ENCODE measurements at regions of chr1 and their contacts with region 1.

Region 1: DNA sequence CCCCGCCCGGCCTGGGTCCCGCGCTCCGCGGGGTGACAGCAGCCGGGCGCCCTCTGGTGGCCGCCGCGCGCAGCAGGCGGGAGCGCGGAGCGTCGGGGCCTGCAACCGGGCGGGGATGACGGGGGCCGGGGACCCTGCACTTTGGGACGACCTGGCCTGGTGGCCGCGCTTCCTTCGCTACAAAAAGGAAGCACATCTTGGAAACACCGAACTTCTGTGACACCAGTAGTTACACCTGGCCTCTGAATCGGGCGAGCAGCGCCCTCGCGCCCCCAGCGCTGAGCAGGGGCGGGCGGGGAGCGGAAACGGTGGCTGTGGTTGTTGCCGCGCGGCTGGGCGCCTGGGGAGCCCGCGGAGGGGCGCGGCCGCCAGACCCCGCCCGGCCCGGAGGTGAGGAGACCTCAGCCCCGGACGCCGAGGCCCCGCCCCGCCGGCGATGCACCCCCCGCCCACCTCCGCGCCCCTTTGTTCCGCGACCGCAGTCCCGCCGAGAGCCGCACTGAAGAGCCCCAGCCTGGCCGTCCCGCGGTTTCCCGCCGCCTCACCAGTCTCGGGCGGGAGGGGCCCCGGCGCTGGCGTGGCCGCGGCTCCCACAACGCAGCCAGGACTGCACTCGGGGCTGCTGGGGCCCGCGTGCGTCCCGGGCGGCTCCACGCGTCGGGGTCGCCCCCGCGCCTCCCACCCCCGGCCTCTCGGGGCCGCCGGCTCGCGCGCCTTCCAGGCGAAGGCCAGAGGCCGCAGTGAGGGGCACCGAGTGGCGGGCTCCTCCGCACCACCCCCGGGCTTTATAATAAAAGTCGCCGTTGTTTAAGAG is 59.3 kb downstream of the H3-3A start:
- DNase-seq: peak in 1 of 2 experiments; percentile 85
- H3K4me3 ChIP-seq: peak overlapping the region; percentile 79
- H3K27ac ChIP-seq: peak overlapping the region; percentile 74
- H3K4me1 ChIP-seq: peaks cover 26% of the 10 kb centered on the region
- H3K27me3 ChIP-seq: no peaks in the 10 kb centered on the region
- CTCF ChIP-seq: peak; percentile 71

Region 2: GRCh38 chr1:225474986-225475820 is 646.6 kb before region 1 on chr1:
- CTCF ChIA-PET with region 1: no interaction called
- POLR2A ChIA-PET with region 1: interaction called, 10 read pairs
- intact Hi-C with region 1: loop called (anchors 5 kb)
- DNase-seq: peak; percentile 54 to 86
- H3K4me3 ChIP-seq: no peak overlapping the region; the same call in 1 of the 2 replicates
- H3K27ac ChIP-seq: no peak overlapping the region
- H3K4me1 ChIP-seq: peaks cover 8% of the 10 kb centered on the region
- H3K27me3 ChIP-seq: no peaks in the 10 kb centered on the region
- CTCF ChIP-seq: peak; percentile 100

Region 3: GRCh38 chr1:225999227-225999911 is 122.4 kb before region 1 on chr1 and contains the start of gene SDE2:
- CTCF ChIA-PET with region 1: no interaction called
- POLR2A ChIA-PET with region 1: no interaction called
- intact Hi-C with region 1: loop called (anchors 1 kb)
- DNase-seq: peak; percentile 92 to 100
- H3K4me3 ChIP-seq: peak within 1 kb of the TSS; percentile 79
- H3K27ac ChIP-seq: peak within 1 kb of the TSS; percentile 67
- H3K4me1 ChIP-seq: peaks cover 27% of the 10 kb centered on the region
- H3K27me3 ChIP-seq: no peaks in the 10 kb centered on the region
- CTCF ChIP-seq: no peak
- total RNA-seq, gene SDE2: 16.0 and 17.3 TPM in 2 replicates

Region 4: GRCh38 chr1:226176870-226177269 is 55.1 kb after region 1 on chr1:
- CTCF ChIA-PET with region 1: interaction called, 11 read pairs
- POLR2A ChIA-PET with region 1: interaction called, 4 read pairs
- intact Hi-C with region 1: loop called (anchors 1 kb)
- DNase-seq: no peak
- H3K4me3 ChIP-seq: no peak overlapping the region
- H3K27ac ChIP-seq: no peak overlapping the region
- H3K4me1 ChIP-seq: no peaks in the 10 kb centered on the region
- H3K27me3 ChIP-seq: no peaks in the 10 kb centered on the region
- CTCF ChIP-seq: no peak

Region 5: DNA sequence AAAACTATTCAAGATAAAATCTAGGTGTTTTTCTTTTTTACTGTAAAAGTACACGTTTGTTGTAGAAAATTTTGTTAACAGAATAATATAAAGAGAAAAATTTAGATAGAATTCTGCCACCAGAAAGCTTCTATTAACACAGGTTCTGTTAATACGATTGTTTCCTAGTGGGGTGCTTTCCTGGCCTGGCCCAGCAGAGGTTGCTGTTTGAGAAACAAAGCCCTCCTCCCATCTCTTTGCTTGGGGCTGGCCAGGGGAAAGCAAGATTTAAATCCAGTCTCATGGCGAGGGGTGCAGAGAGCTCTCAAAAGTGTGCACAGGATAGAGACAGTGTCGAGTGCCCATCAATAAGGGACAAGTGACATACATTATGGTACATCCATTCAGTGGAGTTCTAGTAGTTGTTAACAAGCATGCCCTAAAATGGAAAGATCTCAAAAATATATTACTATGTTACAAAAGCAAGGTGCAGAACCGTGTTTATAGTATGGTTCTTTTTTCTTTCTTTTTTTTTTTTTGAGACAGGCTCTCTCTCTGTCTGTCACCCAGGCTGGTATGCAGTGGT is 79.3 kb after region 1 on chr1:
- CTCF ChIA-PET with region 1: interaction called, 11 read pairs
- POLR2A ChIA-PET with region 1: interaction called, 15 read pairs
- intact Hi-C with region 1: loop called (anchors 1 kb)
- DNase-seq: no peak
- H3K4me3 ChIP-seq: no peak overlapping the region
- H3K27ac ChIP-seq: no peak overlapping the region
- H3K4me1 ChIP-seq: peaks cover 20% of the 10 kb centered on the region
- H3K27me3 ChIP-seq: no peaks in the 10 kb centered on the region
- CTCF ChIP-seq: no peak; the same call in 1 of the 2 replicates

Region 6: GRCh38 chr1:226407497-226408284 is 285.9 kb after region 1 on chr1 and contains the start of gene PARP1:
- CTCF ChIA-PET with region 1: interaction called, 6 read pairs
- POLR2A ChIA-PET with region 1: no interaction called
- intact Hi-C with region 1: loop called (anchors 1 kb)
- DNase-seq: peak; percentile 74 to 96
- H3K4me3 ChIP-seq: peak within 1 kb of the TSS; percentile 60
- H3K27ac ChIP-seq: no peak within 1 kb of the TSS
- H3K4me1 ChIP-seq: peaks cover 33% of the 10 kb centered on the region
- H3K27me3 ChIP-seq: no peaks in the 10 kb centered on the region
- CTCF ChIP-seq: peak; percentile 43
- total RNA-seq, gene PARP1: 123 and 157 TPM in 2 replicates

Region 7: DNA sequence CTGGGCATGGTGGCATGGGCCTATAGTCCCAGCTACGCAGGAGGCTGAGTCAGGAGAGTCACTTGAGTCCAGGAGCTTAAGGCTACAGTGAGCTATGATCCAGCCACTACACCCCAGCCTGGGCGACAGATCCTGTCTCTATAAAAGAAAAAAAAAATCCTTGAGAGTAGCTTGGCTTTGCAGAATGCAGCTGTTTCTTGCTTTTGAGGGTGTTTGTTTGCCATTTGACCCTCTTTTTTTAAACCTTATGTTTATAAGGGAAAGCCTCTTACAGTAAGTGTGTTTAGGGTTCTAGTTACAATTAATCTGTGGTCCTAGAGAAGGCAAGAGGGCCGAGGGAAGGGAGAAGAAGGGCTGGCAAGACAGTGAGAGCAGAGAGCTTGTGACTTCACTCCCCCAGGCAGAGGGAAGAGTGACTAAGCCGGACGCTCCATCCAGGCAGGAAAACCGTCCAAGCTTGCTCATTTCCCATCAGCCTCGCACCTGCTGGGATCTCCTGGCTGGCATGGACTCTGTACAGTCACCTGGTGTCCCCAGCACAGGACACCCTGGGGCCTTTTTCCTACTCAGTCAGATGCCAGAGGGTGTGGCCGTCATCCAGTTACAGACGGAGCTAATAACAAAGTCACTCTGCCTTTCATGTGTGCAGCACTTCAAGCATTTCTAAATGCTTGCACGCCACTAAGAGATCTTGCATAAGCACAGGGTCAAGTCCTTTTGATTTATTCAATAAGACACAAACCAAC is 693.1 kb after region 1 on chr1:
- CTCF ChIA-PET with region 1: no interaction called
- POLR2A ChIA-PET with region 1: no interaction called
- intact Hi-C with region 1: loop called (anchors 2 kb)
- DNase-seq: peak; percentile 98 to 99
- H3K4me3 ChIP-seq: peak overlapping the region; percentile 25; the same call in 1 of the 2 replicates
- H3K27ac ChIP-seq: peak overlapping the region; percentile 97
- H3K4me1 ChIP-seq: peaks cover 56% of the 10 kb centered on the region
- H3K27me3 ChIP-seq: no peaks in the 10 kb centered on the region
- CTCF ChIP-seq: no peak